Astrocyte of the cerebellum (primary cell): ENCODE measurements at regions of chr10 and their contacts with region 1.

Region 1: DNA sequence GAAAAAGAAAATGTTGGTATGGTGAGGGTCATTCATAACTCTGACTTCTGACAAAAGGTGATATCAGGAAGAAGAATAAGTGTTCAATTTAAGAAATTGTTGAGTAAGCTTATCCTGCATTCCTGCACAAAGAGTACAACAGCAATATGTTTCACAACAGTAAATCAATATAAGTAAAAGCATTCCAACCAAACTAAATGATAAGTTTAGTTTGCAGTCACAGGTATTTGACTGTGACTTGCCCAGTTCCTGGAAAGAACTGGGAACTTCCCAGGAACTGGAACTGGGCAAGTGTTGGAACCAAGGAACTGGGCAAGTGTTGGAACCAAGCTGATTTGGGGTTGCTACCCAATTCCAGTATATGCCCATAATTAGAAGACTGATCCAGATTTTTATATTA is 35.1 kb downstream of the NEURL1 start:
- DNase-seq: no peak
- H3K4me3 ChIP-seq: no peak overlapping the region
- CTCF ChIP-seq: no peak

Region 2: DNA sequence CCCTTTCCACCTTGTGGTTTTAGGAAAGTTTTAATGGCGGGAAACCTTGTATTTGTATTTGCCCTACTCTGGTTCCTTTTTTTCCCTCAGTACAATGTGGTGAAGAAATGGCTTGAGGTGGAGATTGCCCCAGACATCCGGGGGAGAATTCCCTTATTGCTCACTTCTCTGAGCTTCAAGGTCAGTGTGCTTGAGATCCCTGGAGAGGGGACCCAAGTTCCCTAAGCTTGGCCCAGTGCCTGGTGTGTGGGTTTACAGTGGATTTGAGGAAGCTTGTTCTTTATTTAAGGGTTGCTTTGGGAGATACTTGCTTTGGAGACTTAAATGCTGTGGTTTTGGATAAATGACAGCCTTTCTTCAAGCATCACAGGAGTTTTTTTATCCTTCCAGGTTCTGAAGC is 94.7 kb before region 1 on chr10:
- in situ Hi-C with region 1: no loop called
- DNase-seq: no peak
- H3K4me3 ChIP-seq: no peak overlapping the region
- CTCF ChIP-seq: no peak

Region 3: DNA sequence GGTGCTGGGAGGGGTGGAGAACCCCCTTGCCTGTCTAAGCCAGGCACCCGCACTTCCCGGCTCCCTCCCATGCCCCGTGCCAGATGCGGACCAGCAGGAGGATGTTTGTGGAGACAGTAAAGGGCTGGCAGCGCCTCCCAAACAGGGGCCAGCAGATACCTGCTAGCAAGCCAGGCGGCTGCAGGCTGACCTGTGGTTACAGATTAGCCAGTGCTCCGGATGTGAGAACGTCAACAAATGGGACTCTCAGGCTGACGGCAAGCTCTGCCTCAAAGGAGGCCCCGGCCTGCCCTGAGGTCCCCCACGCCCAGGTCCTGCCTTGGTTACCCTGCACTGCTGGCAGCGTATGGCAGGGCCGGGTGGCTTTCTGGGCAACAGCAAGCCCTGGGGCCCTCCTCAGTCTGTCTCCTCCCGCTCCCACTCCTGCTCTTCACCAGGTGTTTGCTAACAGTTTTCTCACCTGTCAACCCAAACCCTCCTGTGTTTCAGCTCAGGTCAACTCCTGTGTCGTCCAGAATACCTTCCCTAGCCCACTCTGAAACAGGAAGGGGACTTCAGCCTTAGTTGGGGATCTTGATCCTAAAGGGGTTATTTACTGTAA is 50.3 kb after region 1 on chr10:
- in situ Hi-C with region 1: loop called (anchors 5 kb)
- DNase-seq: no peak
- H3K4me3 ChIP-seq: no peak overlapping the region
- CTCF ChIP-seq: no peak

Region 4: DNA sequence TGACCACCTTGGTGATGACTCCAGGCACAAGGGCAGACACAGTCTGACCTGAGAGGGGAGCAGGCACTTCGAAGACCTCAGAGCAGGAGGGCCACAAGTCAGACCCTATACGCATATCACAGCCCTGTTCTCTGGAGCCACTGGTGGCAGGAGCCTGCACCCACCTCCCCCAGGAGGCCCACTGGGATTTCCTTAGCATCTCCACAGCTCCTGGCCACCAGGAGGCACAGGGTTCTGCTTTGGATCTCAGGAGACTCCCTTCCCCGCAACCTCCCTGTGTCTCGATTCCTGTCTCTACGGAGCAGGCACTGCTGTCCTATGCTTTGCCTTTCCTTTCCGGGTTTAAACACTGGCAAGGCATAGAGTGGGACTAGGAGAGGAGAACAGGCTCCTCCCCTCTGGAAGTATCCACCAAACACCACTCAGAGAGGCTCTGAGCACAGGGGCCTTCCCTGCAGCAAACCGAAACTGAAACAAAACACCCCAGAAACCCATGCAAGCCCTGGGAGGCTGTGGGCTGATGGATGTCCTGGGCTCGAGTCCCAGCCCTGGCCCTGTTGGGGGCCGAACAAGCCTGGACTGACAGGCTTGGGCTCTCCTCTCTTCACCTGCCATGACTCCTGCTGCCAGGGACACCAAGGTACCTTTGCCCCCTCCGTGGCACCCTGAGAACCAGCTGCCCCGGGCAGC is 131.3 kb after region 1 on chr10:
- in situ Hi-C with region 1: no loop called
- DNase-seq: peak; percentile 90
- H3K4me3 ChIP-seq: peak overlapping the region; percentile 56
- CTCF ChIP-seq: no peak